ENCODE measurements at regions of chr1 and their contacts with region 1.

Region 1: DNA sequence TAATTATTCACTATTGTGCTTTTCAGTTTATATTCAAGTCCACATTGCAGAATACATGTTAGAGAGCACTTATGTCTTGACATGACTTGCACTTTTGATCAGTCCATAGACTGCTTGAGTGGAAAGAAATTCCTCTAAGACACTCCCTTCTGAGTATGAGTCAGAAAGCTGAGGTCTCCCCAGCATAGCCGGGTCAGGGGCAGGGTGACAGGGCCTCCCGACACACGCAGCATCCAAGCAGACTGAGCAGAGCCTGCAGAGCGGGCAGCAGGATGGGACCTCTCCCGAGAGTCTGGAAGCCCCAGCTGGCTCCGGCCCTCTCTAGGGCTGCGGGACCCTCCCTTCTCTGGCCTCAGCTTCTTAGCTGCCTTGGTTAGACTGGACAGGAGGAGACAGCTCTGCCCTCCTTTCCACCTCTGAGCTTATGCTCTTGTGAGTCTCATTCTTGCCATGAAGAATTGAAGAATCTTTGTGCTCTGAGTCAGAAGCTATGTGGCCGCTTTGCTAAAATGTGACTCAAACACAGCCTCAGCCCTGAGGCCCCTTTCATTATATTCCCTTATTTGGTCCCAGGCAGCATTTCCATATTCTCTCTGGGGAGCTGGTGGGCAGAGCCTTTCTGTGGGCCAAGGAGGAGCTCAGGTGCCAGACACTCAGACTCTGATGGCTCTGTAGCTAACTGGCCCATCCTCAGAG is 11.2 kb upstream of the CAPN2 start:
- DNase-seq: peak; percentile 86
- H3K4me3 Mint-ChIP-seq: peak overlapping the region; percentile 51
- H3K27ac Mint-ChIP-seq: peak overlapping the region; percentile 90
- H3K4me1 Mint-ChIP-seq: peaks cover 61% of the 10 kb centered on the region
- H3K27me3 Mint-ChIP-seq: no peaks in the 10 kb centered on the region
- CTCF ChIP-seq: no peak

Region 2: GRCh38 chr1:223106856-223107255 is 594.2 kb before region 1 on chr1:
- CTCF ChIA-PET with region 1: no interaction called
- intact Hi-C with region 1: no loop called
- DNase-seq: no peak
- H3K4me3 Mint-ChIP-seq: no peak overlapping the region
- H3K27ac Mint-ChIP-seq: no peak overlapping the region
- H3K4me1 Mint-ChIP-seq: peaks cover 40% of the 10 kb centered on the region
- H3K27me3 Mint-ChIP-seq: no peaks in the 10 kb centered on the region
- CTCF ChIP-seq: no peak

Region 3: GRCh38 chr1:223748773-223749733 is 48.0 kb after region 1 on chr1:
- CTCF ChIA-PET with region 1: interaction called, 6 read pairs
- intact Hi-C with region 1: loop called (anchors 2 kb)
- DNase-seq: peak; percentile 44
- H3K4me3 Mint-ChIP-seq: no peak overlapping the region
- H3K27ac Mint-ChIP-seq: peak overlapping the region; percentile 48
- H3K4me1 Mint-ChIP-seq: no peaks in the 10 kb centered on the region
- H3K27me3 Mint-ChIP-seq: no peaks in the 10 kb centered on the region
- CTCF ChIP-seq: peak; percentile 90

Region 4: DNA sequence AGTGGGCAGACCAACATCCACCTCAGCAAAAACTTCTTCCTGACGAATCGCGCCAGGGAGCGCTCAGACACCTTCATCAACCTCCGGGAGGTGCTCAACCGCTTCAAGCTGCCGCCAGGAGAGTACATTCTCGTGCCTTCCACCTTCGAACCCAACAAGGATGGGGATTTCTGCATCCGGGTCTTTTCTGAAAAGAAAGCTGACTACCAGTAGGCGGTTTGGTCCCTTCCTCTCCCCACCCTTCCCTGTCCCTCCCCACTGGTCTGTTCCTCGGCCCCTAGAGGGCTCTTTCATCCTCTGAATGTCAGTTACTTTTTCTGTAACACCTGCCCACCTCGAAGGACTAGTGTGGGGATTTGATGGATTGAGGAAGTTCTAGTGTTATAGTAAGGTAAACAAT is 58.2 kb after region 1 on chr1:
- CTCF ChIA-PET with region 1: no interaction called
- intact Hi-C with region 1: no loop called
- DNase-seq: no peak
- H3K4me3 Mint-ChIP-seq: no peak overlapping the region
- H3K27ac Mint-ChIP-seq: no peak overlapping the region
- H3K4me1 Mint-ChIP-seq: no peaks in the 10 kb centered on the region
- H3K27me3 Mint-ChIP-seq: no peaks in the 10 kb centered on the region
- CTCF ChIP-seq: no peak

Measured in Calu3 (cell line).